Panc1 (cell line): ENCODE measurements at regions of chr1 and their contacts with region 1.

Region 1: GRCh38 chr1:26027716-26028489 is 6.3 kb downstream of the EXTL1 start:
- DNase-seq: no peak
- ATAC-seq: peak; percentile 31
- H3K4me3 ChIP-seq: no peak overlapping the region
- H3K27ac ChIP-seq: no peak overlapping the region
- H3K4me1 ChIP-seq: peaks cover 5% of the 10 kb centered on the region; the same call in 1 of the 2 replicates
- H3K27me3 ChIP-seq: no peaks in the 10 kb centered on the region
- CTCF ChIP-seq: no peak

Region 2: GRCh38 chr1:25895365-25895993 is 132.4 kb before region 1 on chr1:
- CTCF ChIA-PET with region 1: no interaction called
- POLR2A ChIA-PET with region 1: no interaction called
- in situ Hi-C with region 1: no loop called
- intact Hi-C with region 1: no loop called
- DNase-seq: peak; percentile 64
- ATAC-seq: peak; percentile 81
- H3K4me3 ChIP-seq: no peak overlapping the region
- H3K27ac ChIP-seq: peak overlapping the region; percentile 74
- H3K4me1 ChIP-seq: peaks cover 47% of the 10 kb centered on the region
- H3K27me3 ChIP-seq: no peaks in the 10 kb centered on the region
- CTCF ChIP-seq: peak; percentile 98

Region 3: GRCh38 chr1:26016388-26017188 is 11.3 kb before region 1 on chr1:
- CTCF ChIA-PET with region 1: interaction called, 10 read pairs
- POLR2A ChIA-PET with region 1: interaction called, 3 read pairs
- in situ Hi-C with region 1: no loop called
- intact Hi-C with region 1: no loop called
- DNase-seq: no peak
- ATAC-seq: no peak
- H3K4me3 ChIP-seq: no peak overlapping the region
- H3K27ac ChIP-seq: no peak overlapping the region
- H3K4me1 ChIP-seq: 0 out of 2 replicates have a peak, but pooled peaks cover 3% of the 10 kb centered on the region
- H3K27me3 ChIP-seq: no peaks in the 10 kb centered on the region
- CTCF ChIP-seq: no peak